CD8-positive, alpha-beta memory T cell (primary cell): ENCODE measurements at regions of chr20 and their contacts with region 1.

Region 1: DNA sequence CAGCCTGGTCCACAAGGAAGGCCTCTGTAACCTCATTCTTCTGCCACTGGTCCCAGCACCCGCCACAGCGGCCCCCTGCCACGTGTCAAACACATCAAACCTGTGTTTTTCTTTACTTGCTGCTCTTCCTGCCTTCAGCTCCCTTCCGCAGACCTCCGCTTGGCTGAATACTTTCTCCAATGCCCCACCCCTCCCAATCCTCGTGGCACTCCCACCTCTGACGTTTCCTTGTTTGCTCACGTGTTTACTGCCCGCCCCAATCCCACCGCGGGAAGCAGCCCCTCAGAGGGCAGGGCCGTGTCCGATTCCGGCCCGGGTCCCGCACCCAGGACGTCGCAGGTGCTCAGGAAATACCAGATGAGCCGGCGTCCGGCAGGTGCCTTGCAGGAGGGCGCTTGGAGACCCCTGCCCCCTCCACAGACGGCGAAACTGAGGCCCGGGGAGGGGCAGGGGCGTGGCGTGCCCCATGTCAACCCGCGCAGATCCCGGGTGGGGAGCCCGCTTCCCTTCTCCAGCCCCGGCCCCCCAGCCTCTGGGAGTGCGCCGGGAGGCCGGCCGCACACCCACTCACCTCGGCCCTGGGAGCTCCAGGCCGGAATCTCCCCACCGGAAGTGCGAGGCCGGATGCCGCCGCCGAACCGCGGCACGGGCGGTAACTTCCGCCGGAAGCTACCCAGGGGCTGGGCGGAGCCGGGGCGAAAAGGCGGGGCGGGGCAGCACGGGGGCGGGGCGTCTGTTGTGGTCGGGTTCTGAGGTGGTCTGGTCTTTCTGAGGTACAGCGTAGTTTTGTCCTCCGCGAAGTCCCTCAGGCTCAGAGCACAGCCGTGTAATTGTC is 42.4 kb downstream of the ELMO2 start:
- DNase-seq: peak; percentile 83 to 90 (median 86)
- H3K4me3 ChIP-seq: peak overlapping the region; percentile 82
- H3K4me3 Mint-ChIP-seq: peak overlapping the region; percentile 80 to 98 (median 93)
- H3K27ac ChIP-seq: peak overlapping the region; percentile 98
- H3K27ac Mint-ChIP-seq: peak overlapping the region; percentile 91 to 100 (median 96)
- H3K4me1 ChIP-seq: peaks cover 72% of the 10 kb centered on the region
- H3K4me1 Mint-ChIP-seq: peaks cover 67 to 84% (median 82%) of the 10 kb centered on the region in 3 donors
- H3K27me3 ChIP-seq: no peaks in the 10 kb centered on the region
- H3K27me3 Mint-ChIP-seq: no peaks in the 10 kb centered on the region

Region 2: GRCh38 chr20:46349035-46349741 is 14.8 kb before region 1 on chr20:
- CTCF ChIA-PET with region 1: interaction called, 13 read pairs
- POLR2A ChIA-PET with region 1: interaction called, 4 read pairs
- DNase-seq: peak in 4 of 5 donors; percentile 17 to 37 (median 32)
- H3K4me3 ChIP-seq: no peak overlapping the region
- H3K4me3 Mint-ChIP-seq: no peak overlapping the region
- H3K27ac ChIP-seq: no peak overlapping the region
- H3K27ac Mint-ChIP-seq: peak overlapping the region in 5 of 8 donors; percentile 23 to 91 (median 60)
- H3K4me1 ChIP-seq: no peaks in the 10 kb centered on the region
- H3K4me1 Mint-ChIP-seq: peaks cover 5 to 23% (median 18%) of the 10 kb centered on the region in 3 donors
- H3K27me3 ChIP-seq: no peaks in the 10 kb centered on the region
- H3K27me3 Mint-ChIP-seq: no peaks in the 10 kb centered on the region

Region 3: GRCh38 chr20:46406199-46406985 is 42.4 kb after region 1 on chr20 and contains the start of gene ELMO2:
- CTCF ChIA-PET with region 1: interaction called, 10 read pairs
- POLR2A ChIA-PET with region 1: interaction called, 51 read pairs
- DNase-seq: peak; percentile 95 to 96 (median 95)
- H3K4me3 ChIP-seq: peak within 1 kb of the TSS; percentile 91
- H3K4me3 Mint-ChIP-seq: peak within 1 kb of the TSS; percentile 91 to 99 (median 96)
- H3K27ac ChIP-seq: peak within 1 kb of the TSS; percentile 88
- H3K27ac Mint-ChIP-seq: peak within 1 kb of the TSS; percentile 91 to 100 (median 96)
- H3K4me1 ChIP-seq: peaks cover 47% of the 10 kb centered on the region
- H3K4me1 Mint-ChIP-seq: peaks cover 55 to 72% (median 67%) of the 10 kb centered on the region in 3 donors
- H3K27me3 ChIP-seq: no peaks in the 10 kb centered on the region
- H3K27me3 Mint-ChIP-seq: peaks cover 0 to 5% of the 10 kb centered on the region in 2 donors
- total RNA-seq, gene ELMO2: 59.5 to 68.2 TPM